Mucosa of descending colon (tissue), 3 donors: ENCODE measurements at regions of chr6 and their contacts with region 1.

Region 1: GRCh38 chr6:44655412-44656342 is 268.2 kb downstream of the CDC5L start:
- DNase-seq: peak in 2 of 3 donors; percentile 79 to 80
- ATAC-seq: peak; percentile 76
- H3K4me3 ChIP-seq: no peak overlapping the region
- H3K4me1 ChIP-seq: peaks cover 4% of the 10 kb centered on the region
- CTCF ChIP-seq: peak; percentile 94

Region 2: GRCh38 chr6:45714741-45715507 is 1059.2 kb after region 1 on chr6:
- intact Hi-C with region 1: loop called in 1 of 2 experiments (anchors 10 kb)
- DNase-seq: peak in 1 of 3 donors; percentile 73
- ATAC-seq: peak; percentile 91
- H3K4me3 ChIP-seq: no peak overlapping the region
- H3K4me1 ChIP-seq: no peaks in the 10 kb centered on the region
- CTCF ChIP-seq: peak; percentile 73

Region 3: GRCh38 chr6:45922728-45923351 is 1267.2 kb after region 1 on chr6:
- intact Hi-C with region 1: loop called (anchors 5 to 10 kb)
- DNase-seq: peak; percentile 51 to 66 (median 60)
- ATAC-seq: peak; percentile 72
- H3K4me3 ChIP-seq: no peak overlapping the region
- H3K4me1 ChIP-seq: no peaks in the 10 kb centered on the region
- CTCF ChIP-seq: no peak